Natural killer cell (primary cell): ENCODE measurements at regions of chr2 and their contacts with region 1.

Region 1: DNA sequence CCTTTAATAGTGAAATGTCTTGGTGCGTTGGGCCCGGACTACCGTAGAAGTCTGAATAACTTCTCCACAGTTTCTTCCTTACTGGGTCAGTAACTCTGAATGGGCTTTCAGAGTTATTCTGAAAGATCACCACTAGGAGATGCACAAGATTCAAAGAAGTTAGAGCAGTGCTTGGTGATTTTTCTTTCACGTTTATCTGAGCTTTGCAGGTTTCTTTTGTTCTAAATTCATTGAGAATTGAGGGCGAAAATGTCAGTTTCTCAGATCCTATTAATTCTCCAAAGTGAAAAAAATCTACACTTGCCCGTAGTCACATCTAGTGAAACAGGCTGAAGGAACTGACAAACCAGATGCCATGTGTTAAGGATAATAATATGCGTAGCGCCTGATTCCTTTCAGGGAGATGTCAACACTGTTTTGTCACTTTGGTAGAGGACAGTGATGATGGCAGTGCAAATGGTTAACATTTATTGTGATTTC is 70.1 kb downstream of the QPCT start:
- DNase-seq: peak in 1 of 2 donors; percentile 73
- ATAC-seq: peak; percentile 74 to 84 (median 79)
- H3K4me3 ChIP-seq: no peak overlapping the region
- H3K4me3 Mint-ChIP-seq: no peak overlapping the region
- H3K27ac ChIP-seq: no peak overlapping the region
- H3K27ac Mint-ChIP-seq: no peak overlapping the region
- H3K4me1 ChIP-seq: no peaks in the 10 kb centered on the region
- H3K4me1 Mint-ChIP-seq: peaks cover 8 to 13% of the 10 kb centered on the region in 2 donors
- H3K27me3 ChIP-seq: no peaks in the 10 kb centered on the region
- H3K27me3 Mint-ChIP-seq: peaks cover 0 to 2% of the 10 kb centered on the region in 2 donors
- CTCF ChIP-seq: peak; percentile 89

Region 2: GRCh38 chr2:37205689-37206341 is 208.7 kb before region 1 on chr2:
- intact Hi-C with region 1: no loop called
- DNase-seq: no peak
- ATAC-seq: no peak
- H3K4me3 ChIP-seq: no peak overlapping the region
- H3K4me3 Mint-ChIP-seq: no peak overlapping the region
- H3K27ac ChIP-seq: no peak overlapping the region
- H3K27ac Mint-ChIP-seq: peak overlapping the region; percentile 10 to 63
- H3K4me1 ChIP-seq: no peaks in the 10 kb centered on the region
- H3K4me1 Mint-ChIP-seq: peaks cover 13 to 21% of the 10 kb centered on the region in 2 donors
- H3K27me3 ChIP-seq: no peaks in the 10 kb centered on the region
- H3K27me3 Mint-ChIP-seq: no peaks in the 10 kb centered on the region
- CTCF ChIP-seq: no peak

Region 3: DNA sequence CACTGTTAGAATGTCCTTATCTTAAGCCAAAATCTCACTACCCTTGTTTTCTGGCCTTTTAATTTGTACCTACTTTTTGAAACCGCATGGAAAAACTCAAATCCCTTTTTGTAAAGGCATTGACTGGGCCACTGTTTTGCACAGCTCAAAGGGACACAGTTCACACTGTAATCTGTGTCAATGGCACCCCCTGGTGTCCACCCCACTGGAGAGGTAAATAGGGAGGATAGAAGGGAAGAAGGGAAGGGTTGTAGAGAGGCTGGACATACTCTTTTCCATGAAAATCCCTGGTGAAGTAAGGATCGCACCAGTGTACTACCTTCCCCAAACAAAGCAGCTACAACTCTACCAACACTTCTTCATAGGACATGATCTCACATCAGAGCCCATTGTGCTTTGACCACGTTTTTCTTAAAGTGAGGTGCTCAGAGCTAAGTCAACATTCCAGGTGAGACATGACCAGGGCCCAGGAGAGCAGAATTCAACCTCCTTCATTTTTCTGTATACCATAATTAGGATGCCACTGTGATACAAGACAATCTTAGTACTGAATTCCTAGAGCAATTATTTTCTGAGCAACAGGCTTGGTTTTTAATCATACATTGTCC is 418.2 kb after region 1 on chr2:
- intact Hi-C with region 1: loop called (anchors 1 kb)
- DNase-seq: peak; percentile 72 to 88
- ATAC-seq: peak; percentile 83 to 96 (median 94)
- H3K4me3 ChIP-seq: no peak overlapping the region
- H3K4me3 Mint-ChIP-seq: no peak overlapping the region
- H3K27ac ChIP-seq: no peak overlapping the region
- H3K27ac Mint-ChIP-seq: no peak overlapping the region
- H3K4me1 ChIP-seq: peaks cover 9% of the 10 kb centered on the region
- H3K4me1 Mint-ChIP-seq: peaks cover 12 to 21% of the 10 kb centered on the region in 2 donors
- H3K27me3 ChIP-seq: no peaks in the 10 kb centered on the region
- H3K27me3 Mint-ChIP-seq: no peaks in the 10 kb centered on the region
- CTCF ChIP-seq: peak; percentile 92

Region 4: GRCh38 chr2:38274286-38275276 is 860.1 kb after region 1 on chr2:
- intact Hi-C with region 1: loop called (anchors 5 kb)
- DNase-seq: peak in 1 of 2 donors; percentile 65
- ATAC-seq: peak; percentile 79 to 81 (median 80)
- H3K4me3 ChIP-seq: no peak overlapping the region
- H3K4me3 Mint-ChIP-seq: no peak overlapping the region
- H3K27ac ChIP-seq: no peak overlapping the region
- H3K27ac Mint-ChIP-seq: no peak overlapping the region
- H3K4me1 ChIP-seq: no peaks in the 10 kb centered on the region
- H3K4me1 Mint-ChIP-seq: peaks cover 0 to 6% of the 10 kb centered on the region in 2 donors
- H3K27me3 ChIP-seq: no peaks in the 10 kb centered on the region
- H3K27me3 Mint-ChIP-seq: no peaks in the 10 kb centered on the region
- CTCF ChIP-seq: peak; percentile 68